ENCODE measurements at regions of chr11 and their contacts with region 1.

Region 1: GRCh38 chr11:112795142-112795815 is 165.9 kb upstream of the NCAM1 start:
- DNase-seq: peak; percentile 72
- H3K4me3 Mint-ChIP-seq: no peak overlapping the region
- H3K27ac Mint-ChIP-seq: no peak overlapping the region
- H3K4me1 Mint-ChIP-seq: no peaks in the 10 kb centered on the region
- H3K27me3 Mint-ChIP-seq: no peaks in the 10 kb centered on the region
- CTCF ChIP-seq: peak; percentile 77

Region 2: DNA sequence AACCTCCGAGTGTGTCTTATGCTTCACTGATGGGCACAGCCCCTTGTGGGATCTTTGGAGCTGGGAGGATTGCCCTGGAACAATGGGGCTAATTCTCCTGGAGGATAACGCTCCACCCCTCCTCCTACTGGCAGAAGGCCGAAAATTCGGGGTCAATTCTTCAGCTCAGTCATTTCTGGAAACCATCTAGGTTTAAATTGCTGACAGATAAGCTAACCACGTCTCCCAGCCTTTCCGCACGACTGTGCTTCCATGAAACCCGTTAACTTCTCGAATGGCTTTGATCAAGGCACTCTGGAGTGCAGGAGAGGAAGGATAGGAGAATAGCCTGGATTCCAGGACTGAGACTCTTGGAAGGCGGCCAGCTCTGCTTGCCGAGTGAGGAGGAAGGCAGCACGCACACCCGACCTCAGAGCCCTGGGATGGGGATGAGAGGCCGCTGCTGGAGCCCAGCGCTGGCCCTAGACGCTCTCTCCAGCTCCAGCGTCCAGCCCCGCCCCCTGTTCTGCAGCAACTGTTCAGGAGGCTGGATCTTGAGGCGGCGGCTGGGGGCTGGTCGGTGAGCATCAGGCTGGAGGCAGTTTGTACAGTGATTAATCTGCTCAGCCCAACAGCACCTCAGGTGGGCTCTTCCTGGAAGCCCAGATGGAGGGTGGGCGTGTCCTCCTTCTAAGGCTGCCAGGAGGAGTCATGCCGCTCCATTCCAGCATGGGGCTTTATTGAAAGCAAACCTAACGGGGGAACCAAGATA is 10.8 kb before region 1 on chr11:
- CTCF ChIA-PET with region 1: interaction called, 11 read pairs
- POLR2A ChIA-PET with region 1: no interaction called
- intact Hi-C with region 1: no loop called
- DNase-seq: peak; percentile 38
- H3K4me3 Mint-ChIP-seq: no peak overlapping the region
- H3K27ac Mint-ChIP-seq: no peak overlapping the region
- H3K4me1 Mint-ChIP-seq: peaks cover 9% of the 10 kb centered on the region
- H3K27me3 Mint-ChIP-seq: peaks cover 27% of the 10 kb centered on the region
- CTCF ChIP-seq: no peak

Region 3: DNA sequence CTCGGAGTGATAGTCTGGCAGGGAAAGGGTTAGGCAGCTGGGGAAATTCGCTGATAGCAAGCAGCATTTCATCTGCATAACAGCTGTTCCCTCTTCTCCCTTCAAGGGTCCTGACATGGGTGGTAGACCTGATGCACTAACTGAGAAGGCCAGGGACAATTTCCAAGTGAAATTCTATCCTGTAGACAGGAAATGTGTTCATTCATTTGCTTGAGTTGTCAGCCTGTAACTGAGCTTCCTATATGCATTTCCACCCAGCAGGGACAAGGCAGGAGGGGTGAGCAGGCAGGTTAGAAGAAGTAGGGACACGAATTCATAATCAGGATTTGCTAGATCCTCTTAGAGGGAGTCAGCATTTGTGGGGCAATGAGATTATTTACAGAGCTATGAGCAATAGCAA is 11.6 kb after region 1 on chr11:
- CTCF ChIA-PET with region 1: interaction called, 21 read pairs
- POLR2A ChIA-PET with region 1: no interaction called
- intact Hi-C with region 1: no loop called
- DNase-seq: no peak
- H3K4me3 Mint-ChIP-seq: no peak overlapping the region
- H3K27ac Mint-ChIP-seq: no peak overlapping the region
- H3K4me1 Mint-ChIP-seq: no peaks in the 10 kb centered on the region
- H3K27me3 Mint-ChIP-seq: peaks cover 20% of the 10 kb centered on the region
- CTCF ChIP-seq: no peak

Region 4: DNA sequence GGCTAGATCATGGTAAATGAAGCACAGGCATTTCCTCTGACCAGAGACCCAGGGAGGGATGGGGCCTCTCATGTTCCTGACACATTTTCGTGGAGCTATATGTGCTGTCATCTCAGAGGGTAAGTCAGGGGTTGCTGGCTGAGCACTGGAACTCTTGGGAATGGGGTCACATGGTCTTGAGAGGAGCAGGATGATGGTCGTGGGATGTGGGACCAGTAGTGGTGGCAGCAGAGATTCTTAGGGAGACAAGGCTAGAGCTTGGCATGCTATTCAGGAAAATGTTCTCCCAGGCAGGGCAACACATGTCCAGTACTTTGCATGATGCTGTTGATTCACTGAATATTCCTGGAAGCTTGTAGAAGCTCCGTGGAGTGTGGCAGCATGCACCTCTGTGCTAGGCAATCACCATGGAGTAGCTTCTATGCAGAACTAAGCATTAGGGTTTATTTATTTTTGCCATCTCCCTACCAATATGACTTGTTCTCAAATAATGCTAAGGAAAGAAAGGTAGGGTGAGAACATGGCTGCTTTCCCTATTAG is 487.7 kb after region 1 on chr11:
- CTCF ChIA-PET with region 1: interaction called, 61 read pairs
- POLR2A ChIA-PET with region 1: no interaction called
- intact Hi-C with region 1: no loop called
- DNase-seq: no peak
- H3K4me3 Mint-ChIP-seq: no peak overlapping the region
- H3K27ac Mint-ChIP-seq: no peak overlapping the region
- H3K4me1 Mint-ChIP-seq: no peaks in the 10 kb centered on the region
- H3K27me3 Mint-ChIP-seq: no peaks in the 10 kb centered on the region
- CTCF ChIP-seq: no peak